HEK293 (cell line): ENCODE measurements at regions of chr19 and their contacts with region 1.

Region 1: DNA sequence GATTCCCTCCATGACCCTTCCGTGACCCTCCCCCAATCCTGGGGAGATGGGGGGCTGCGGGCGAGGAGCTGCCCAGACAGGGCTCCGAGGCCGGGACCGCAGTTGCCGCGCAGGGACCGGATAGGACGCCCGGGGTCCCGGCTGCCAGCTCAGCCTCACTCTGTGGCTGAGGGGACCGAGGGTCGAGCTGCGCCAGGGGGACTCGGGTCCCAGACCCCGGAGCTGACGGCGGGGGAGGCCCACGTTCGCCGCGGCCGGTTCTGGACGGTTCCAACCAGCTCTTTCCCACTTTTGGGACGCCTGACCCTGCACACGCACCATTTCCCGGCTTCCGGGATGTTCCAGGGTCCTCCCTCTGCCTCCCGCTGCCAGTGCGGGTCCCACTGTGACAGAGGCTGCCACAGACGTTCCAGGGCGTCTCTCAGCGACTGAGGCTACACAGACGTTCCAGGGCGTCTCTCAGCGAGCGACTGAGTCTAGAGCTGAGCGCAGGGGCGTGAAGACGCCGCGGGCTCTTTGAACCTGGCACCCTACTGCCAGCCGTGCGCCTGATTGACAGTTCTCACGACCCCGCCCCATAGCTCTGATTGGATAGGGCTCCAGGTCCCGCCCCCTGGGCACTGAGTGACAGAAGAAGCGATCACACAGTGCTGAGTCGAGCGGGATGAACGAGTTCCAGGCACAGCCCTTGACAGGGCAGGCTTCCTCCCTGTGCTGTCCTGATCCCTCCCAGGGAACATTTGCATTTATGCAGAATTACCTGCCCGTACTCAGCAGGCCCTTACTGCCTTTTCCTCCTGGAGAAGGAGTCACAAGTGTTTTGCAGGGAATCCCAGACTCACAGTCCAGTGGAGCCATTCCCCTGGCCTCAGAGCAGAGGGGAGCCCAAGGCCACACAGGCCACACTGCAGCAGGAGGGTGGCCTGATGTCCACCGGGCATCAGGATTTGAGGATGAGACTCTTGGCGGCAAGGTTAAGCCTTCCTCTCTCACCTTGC is at the start of gene ZNF563:
- H3K4me3 ChIP-seq: peak within 1 kb of the TSS; percentile 79
- H3K27ac ChIP-seq: no peak within 1 kb of the TSS
- H3K4me1 ChIP-seq: no peaks in the 10 kb centered on the region
- CTCF ChIP-seq: no peak

Region 2: DNA sequence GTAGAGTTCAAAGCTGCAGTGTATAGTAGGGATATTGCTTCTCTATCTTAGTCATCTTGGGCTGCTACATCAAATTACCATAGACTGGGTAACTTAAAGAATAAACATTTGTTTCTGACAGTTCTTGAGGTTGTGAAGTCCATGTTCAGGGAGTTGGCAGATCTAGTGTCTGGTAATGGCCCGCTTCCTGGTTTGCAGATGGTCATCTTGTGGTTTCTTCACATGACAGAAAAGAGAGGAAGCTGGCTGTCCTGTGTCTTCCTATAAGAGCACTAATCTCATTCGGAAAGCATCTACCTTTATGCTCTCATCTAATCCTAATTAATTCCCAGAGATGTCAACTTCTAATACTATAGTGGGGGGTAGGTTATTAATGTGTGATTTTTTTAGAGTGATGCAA is 362.4 kb before region 1 on chr19:
- CTCF ChIA-PET with region 1: no interaction called
- POLR2A ChIA-PET with region 1: no interaction called
- H3K4me3 ChIP-seq: no peak overlapping the region
- H3K27ac ChIP-seq: no peak overlapping the region
- H3K4me1 ChIP-seq: no peaks in the 10 kb centered on the region
- CTCF ChIP-seq: no peak

Region 3: DNA sequence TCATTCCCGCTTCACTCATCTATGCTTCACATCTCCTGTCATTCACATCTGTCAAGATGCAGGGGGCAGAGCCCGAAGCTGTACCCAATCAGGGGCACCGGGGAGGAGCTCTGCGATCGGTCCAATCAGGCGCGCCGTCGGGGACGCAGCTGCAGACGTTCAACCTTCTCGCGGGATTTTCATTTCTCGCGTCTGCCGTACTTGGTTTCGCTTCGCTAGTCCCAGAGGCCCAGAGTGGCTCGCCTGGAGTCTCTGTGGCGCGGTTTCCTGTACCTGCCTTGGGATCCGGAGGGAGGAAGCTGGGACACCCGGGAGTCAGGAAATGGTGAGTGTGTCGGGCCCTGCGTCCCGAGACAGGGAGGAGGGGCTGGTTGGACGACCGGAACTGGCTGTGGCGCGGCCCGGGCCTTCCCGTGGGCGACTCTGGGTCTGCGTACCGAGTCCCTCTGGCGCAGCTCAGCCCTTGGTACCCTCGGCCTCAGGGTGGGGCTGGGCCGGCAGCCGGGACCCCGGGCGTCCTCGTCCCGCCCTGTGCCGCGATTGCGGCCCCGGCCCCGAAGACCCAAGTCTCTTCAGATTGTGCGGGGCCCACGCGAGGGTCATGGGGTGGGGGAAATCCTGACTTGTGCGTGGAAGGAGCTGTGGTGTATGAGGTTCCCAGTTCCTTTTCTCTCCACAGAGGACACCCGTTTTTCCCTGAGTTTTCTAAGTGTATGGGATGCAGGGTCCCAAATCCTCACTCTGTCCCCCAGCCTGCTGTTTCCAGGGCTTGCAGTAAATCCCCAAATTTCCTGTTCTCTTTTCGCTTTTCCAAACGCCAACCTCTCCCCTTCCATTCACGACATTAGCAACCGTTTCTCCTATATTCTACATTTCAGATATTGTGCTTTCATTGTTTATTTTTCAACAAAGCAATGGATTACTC is 170.3 kb before region 1 on chr19 and contains the start of gene ZNF136:
- CTCF ChIA-PET with region 1: no interaction called
- POLR2A ChIA-PET with region 1: interaction called, 12 read pairs
- H3K4me3 ChIP-seq: peak within 1 kb of the TSS; percentile 69
- H3K27ac ChIP-seq: peak within 1 kb of the TSS; percentile 80
- H3K4me1 ChIP-seq: no peaks in the 10 kb centered on the region
- CTCF ChIP-seq: no peak

Region 4: GRCh38 chr19:12365236-12366162 is 32.0 kb after region 1 on chr19 and contains the start of gene ZNF442:
- CTCF ChIA-PET with region 1: no interaction called
- POLR2A ChIA-PET with region 1: interaction called, 28 read pairs
- H3K4me3 ChIP-seq: peak within 1 kb of the TSS; percentile 53
- H3K27ac ChIP-seq: no peak within 1 kb of the TSS
- H3K4me1 ChIP-seq: no peaks in the 10 kb centered on the region
- CTCF ChIP-seq: no peak